Right cardiac atrium (tissue), 5 donors: ENCODE measurements at regions of chr6 and their contacts with region 1.

Region 1: DNA sequence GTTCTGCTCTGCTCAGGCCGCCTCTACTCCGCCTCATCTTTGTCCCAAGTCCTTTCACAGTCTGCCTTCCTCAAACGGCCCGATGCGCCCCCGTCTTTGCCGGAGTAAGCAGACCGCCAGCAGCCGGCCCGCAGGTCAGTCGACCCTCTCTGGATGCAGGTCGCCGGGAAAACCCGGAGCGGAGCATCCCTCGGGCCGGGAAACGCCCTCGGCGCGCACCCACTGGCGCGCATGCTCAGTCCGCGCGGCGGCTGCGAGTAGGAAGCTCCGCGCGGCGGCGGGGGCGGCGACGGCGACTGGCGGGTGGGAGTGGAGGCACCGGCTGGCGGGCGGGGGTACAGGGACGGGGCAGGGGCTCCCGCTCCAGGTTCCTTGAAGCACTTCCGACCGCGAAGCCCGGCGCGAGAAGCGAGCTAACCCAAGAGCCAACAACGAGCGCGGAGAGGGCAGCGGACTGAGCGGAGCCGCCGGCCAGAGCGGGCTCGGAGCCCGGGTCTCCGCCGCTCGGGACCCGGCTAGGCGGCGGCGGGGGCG is at the start of gene LRRC1:
- DNase-seq: peak; percentile 94 to 97 (median 97)
- ATAC-seq: peak; percentile 93 to 96
- H3K4me3 ChIP-seq: peak within 1 kb of the TSS; percentile 75
- H3K27ac ChIP-seq: peak within 1 kb of the TSS; percentile 32
- H3K4me1 ChIP-seq: no peaks in the 10 kb centered on the region
- H3K27me3 ChIP-seq: no peaks in the 10 kb centered on the region
- total RNA-seq, gene LRRC1: 1.9 to 3.6 (median 3.3) TPM

Region 2: DNA sequence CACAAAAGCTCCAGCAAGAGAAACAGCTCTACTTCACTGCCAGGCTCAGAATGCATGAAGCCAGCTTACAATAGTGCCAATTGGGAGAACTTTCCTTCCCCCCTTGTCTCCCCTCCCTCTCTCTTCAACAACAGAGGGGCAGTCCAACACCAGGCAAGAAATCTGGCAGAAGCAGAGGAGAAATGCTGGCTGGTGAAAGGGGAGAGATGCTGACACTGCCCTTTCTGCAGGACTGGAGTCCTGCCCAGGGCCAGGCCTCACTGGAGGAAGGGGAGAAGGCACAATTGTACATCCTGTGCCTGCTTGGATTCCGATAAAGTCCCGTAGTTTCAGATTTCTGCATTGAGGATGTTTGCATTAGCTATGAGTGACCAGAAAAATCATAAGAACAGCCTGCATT is 148.6 kb after region 1 on chr6:
- intact Hi-C with region 1: loop called in 1 of 4 experiments (anchors 5 kb)
- DNase-seq: peak; percentile 45 to 83 (median 66)
- ATAC-seq: peak; percentile 88 to 96
- H3K4me3 ChIP-seq: no peak overlapping the region
- H3K27ac ChIP-seq: no peak overlapping the region
- H3K4me1 ChIP-seq: peaks cover 2% of the 10 kb centered on the region
- H3K27me3 ChIP-seq: no peaks in the 10 kb centered on the region